ENCODE measurements at regions of chr2 and their contacts with region 1.

Region 1: GRCh38 chr2:165743442-165743841 is 50.6 kb downstream of the GALNT3 start:
- DNase-seq: peak in 3 of 14 experiments; percentile 8 to 16 (median 13)
- ATAC-seq: no peak
- H3K4me3 ChIP-seq: no peak overlapping the region
- H3K4me3 Mint-ChIP-seq: no peak overlapping the region
- H3K27ac ChIP-seq: no peak overlapping the region
- H3K27ac Mint-ChIP-seq: no peak overlapping the region
- H3K4me1 ChIP-seq: no peaks in the 10 kb centered on the region
- H3K4me1 Mint-ChIP-seq: no peaks in the 10 kb centered on the region
- H3K27me3 ChIP-seq: no peaks in the 10 kb centered on the region
- H3K27me3 Mint-ChIP-seq: no peaks in the 10 kb centered on the region
- CTCF ChIP-seq: no peak

Region 2: GRCh38 chr2:165428926-165429325 is 314.5 kb before region 1 on chr2:
- CTCF ChIA-PET with region 1: no interaction called
- POLR2A ChIA-PET with region 1: no interaction called
- intact Hi-C with region 1: no loop called
- DNase-seq: no peak
- ATAC-seq: no peak
- H3K4me3 ChIP-seq: no peak overlapping the region
- H3K4me3 Mint-ChIP-seq: no peak overlapping the region
- H3K27ac ChIP-seq: no peak overlapping the region
- H3K27ac Mint-ChIP-seq: no peak overlapping the region
- H3K4me1 ChIP-seq: no peaks in the 10 kb centered on the region
- H3K4me1 Mint-ChIP-seq: no peaks in the 10 kb centered on the region
- H3K27me3 ChIP-seq: no peaks in the 10 kb centered on the region
- H3K27me3 Mint-ChIP-seq: no peaks in the 10 kb centered on the region
- CTCF ChIP-seq: no peak

Region 3: GRCh38 chr2:165725421-165725820 is 18.0 kb before region 1 on chr2:
- CTCF ChIA-PET with region 1: no interaction called
- POLR2A ChIA-PET with region 1: no interaction called
- intact Hi-C with region 1: loop called in 1 of 2 experiments (anchors 1 kb)
- DNase-seq: no peak
- ATAC-seq: no peak
- H3K4me3 ChIP-seq: no peak overlapping the region
- H3K4me3 Mint-ChIP-seq: no peak overlapping the region
- H3K27ac ChIP-seq: no peak overlapping the region
- H3K27ac Mint-ChIP-seq: no peak overlapping the region
- H3K4me1 ChIP-seq: no peaks in the 10 kb centered on the region
- H3K4me1 Mint-ChIP-seq: no peaks in the 10 kb centered on the region
- H3K27me3 ChIP-seq: no peaks in the 10 kb centered on the region
- H3K27me3 Mint-ChIP-seq: peaks cover 6% of the 10 kb centered on the region
- CTCF ChIP-seq: no peak